ENCODE measurements at regions of chr6 and their contacts with region 1.

Region 1: DNA sequence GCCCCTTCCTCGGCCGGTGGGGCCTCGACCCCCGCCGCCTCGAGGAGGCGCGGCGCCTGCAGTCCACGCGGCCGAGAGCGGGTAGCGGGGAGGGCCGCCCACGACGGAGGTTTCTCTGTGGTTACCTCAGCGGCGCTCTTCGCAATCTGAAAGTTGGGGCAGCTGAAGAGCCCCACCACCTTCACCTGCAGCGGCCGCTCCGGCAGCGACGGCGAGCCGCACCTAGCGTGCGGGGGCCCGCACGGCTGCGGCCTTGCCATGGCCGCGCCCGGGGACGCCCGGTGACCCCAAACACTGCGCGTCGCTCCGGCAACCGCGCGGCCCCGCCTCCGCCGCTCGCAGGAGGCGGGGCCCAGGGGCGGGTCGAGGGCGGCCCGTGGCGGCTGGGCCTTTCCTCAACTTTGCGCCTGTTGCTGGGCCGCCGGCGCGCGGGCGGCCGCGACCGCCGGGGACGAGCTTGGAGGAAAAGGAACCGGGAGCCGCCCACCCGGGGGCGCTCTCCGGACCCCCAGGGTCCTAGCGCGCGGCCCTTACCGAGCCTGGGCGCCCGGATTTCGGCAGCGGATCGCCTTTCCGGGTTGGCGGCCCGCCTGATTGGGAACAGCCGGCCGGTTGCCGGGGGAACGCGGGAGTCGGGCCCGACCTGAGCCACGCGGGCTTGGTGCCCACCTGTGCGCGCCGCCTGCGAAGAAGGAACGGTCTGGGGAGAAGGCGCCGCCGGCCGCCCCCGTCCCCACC is at the starts of genes PPIL6 and SMPD2:
- DNase-seq: peak; percentile 48 to 94 (median 86)

Region 2: DNA sequence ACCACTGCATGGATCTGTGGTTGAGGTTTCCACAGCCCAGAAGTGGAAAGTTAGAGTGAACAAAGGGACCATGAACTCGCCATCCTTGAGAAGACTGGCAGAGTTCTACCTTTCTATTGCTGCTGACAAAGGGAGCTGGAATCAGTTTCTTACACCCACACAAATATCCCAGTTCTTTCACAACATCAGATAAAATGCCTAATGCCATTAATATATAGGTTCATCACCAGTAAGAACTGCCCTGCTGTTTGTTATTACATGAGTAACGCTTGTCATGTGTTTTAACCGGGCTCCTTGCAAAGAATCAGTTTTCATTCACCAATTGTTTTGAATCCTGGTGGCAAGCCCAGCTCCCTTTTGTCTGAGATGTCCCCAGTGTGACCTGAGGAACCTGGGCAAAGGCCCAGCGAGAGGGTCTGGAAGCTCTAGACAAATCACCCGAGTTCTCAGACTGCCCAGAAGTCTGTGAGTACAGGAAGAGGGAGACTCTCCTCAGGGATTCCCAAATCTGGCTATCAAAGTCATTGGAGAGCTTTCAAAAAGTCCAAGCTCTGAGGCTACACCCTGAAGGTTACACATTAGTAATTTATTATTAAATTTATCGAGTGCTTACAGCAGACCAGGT is 50.7 kb before region 1 on chr6:
- intact Hi-C with region 1: loop called (anchors 5 kb)
- DNase-seq: no peak

Region 3: DNA sequence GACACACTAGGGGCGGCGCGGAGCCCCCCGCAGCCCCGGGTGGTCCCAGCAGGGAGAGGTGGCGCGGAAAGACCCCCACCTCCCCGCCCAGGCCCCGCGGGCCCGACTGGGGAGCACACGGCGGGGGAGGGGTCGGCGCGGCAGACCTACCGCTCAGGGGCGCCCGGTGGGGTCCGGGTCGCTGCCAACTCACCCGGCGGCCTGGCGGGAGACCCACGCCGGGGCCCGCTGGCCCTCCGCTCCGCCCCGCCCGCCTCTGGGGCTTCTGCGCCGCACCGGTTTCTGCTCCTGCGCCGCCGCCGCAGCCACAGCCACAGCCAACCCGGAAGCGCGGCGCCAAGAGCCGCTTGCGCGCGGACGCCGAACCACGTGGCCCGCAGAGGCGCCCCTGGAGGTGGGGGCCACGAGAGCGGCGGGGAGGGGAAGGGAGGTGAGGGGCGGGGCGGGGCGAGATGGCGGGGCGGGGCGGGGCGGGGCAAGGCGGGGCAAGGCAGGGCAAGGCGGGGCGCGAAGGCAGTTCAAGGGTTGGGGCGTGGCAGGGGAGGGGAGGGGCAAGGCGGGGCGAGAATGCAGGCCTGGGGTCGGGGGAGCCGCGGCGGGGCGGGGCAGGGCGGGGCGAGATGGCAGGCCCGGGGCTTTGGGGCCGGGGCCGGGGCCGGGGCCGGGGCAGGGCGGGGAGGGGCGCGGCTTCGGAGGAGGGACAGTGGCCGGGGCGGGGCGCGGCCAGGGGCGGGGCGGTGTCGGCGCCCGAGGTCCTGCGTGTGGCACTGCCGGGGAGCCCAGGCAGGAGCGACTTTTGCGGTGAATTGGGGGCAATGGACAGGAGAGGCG is 42.6 kb after region 1 on chr6 and contains the start of gene ZBTB24:
- intact Hi-C with region 1: loop called (anchors 1 kb)
- DNase-seq: peak; percentile 66 to 96 (median 92)

Region 4: DNA sequence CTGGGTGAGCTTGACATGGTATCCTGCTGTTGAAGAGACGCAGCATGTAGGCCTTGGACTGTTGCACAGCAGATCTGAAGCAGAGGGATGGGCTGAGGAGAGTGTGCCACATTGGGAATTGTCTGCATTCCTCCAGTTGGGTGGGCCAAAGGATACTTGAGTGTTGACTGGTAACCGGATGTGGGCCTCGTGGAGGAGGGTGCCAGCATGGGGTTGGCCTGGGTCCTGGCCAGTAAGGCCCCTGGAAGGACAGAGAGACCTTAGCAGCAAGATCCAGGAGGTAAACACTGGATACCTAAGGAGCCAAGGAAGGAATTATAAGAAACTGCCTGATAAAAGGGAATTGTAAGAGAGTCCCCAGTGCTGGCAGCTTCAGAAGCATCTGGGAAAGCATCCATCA is 327.5 kb after region 1 on chr6:
- intact Hi-C with region 1: no loop called
- DNase-seq: no peak

Measured in head of caudate nucleus (tissue), 42 donors.